H1 (cell line): ENCODE measurements at regions of chr6 and their contacts with region 1.

Region 1: DNA sequence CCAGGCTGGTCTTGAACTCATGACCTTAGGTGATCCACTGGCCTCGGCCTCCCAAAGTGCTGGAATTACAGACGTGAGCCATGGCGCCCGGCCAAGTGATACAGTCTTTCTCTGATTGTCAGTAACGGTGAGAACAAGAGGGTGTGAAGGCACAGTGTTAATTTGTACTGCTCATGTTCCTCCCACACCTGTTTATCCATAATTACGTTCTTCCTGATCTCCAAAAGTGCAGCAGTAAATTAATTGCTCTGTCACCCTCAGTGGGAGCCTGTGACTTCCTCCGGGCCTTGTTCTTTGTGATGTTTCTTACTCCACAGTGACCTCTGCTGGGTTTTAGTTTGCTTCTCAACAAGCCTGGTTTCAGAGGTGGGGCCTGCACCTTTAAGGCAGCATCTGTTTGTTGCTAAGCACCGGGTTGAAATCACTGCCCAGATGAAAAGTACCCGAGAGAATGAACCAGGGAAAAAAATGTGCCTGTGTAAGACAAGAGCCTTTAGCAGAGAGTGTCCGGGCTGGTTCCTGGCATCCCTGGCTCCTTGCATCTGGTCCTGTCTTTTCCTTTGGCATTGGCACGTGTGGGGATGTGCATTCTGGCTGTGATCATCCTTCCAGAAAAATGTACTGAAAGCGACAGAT is 89.1 kb upstream of the CLDN20 start:
- DNase-seq: peak; percentile 54 to 64
- H3K4me3 ChIP-seq: no peak overlapping the region
- H3K27ac ChIP-seq: no peak overlapping the region
- H3K4me1 ChIP-seq: peaks cover 2 to 11% (median 7%) of the 10 kb centered on the region in 4 experiments; a peak in 6 of 7 replicates
- H3K27me3 ChIP-seq: no peaks in the 10 kb centered on the region
- CTCF ChIP-seq: peak; percentile 28 to 80 (median 79)
- EP300 ChIP-seq: no peak
- POLR2A ChIP-seq: no peak
- RAD21 ChIP-seq: peak; percentile 87 to 91

Region 2: GRCh38 chr6:154928325-154928922 is 246.3 kb before region 1 on chr6:
- CTCF ChIA-PET with region 1: interaction called, 63 read pairs
- POLR2A ChIA-PET with region 1: no interaction called
- DNase-seq: peak in 1 of 2 experiments; percentile 77
- H3K4me3 ChIP-seq: no peak overlapping the region
- H3K27ac ChIP-seq: no peak overlapping the region
- H3K4me1 ChIP-seq: peaks cover 5 to 17% (median 7%) of the 10 kb centered on the region in 4 experiments
- H3K27me3 ChIP-seq: no peaks in the 10 kb centered on the region
- CTCF ChIP-seq: peak; percentile 1 to 87 (median 79)
- EP300 ChIP-seq: no peak
- POLR2A ChIP-seq: no peak
- RAD21 ChIP-seq: peak; percentile 97 to 98

Region 3: GRCh38 chr6:155228546-155229166 is 54.0 kb after region 1 on chr6:
- CTCF ChIA-PET with region 1: interaction called, 17 read pairs
- POLR2A ChIA-PET with region 1: no interaction called
- DNase-seq: no peak
- H3K4me3 ChIP-seq: no peak overlapping the region
- H3K27ac ChIP-seq: no peak overlapping the region
- H3K4me1 ChIP-seq: peaks cover 0 to 9% (median 4%) of the 10 kb centered on the region in 4 experiments; a peak in 5 of 7 replicates
- H3K27me3 ChIP-seq: no peaks in the 10 kb centered on the region
- CTCF ChIP-seq: no peak
- EP300 ChIP-seq: no peak
- POLR2A ChIP-seq: no peak
- RAD21 ChIP-seq: no peak

Region 4: DNA sequence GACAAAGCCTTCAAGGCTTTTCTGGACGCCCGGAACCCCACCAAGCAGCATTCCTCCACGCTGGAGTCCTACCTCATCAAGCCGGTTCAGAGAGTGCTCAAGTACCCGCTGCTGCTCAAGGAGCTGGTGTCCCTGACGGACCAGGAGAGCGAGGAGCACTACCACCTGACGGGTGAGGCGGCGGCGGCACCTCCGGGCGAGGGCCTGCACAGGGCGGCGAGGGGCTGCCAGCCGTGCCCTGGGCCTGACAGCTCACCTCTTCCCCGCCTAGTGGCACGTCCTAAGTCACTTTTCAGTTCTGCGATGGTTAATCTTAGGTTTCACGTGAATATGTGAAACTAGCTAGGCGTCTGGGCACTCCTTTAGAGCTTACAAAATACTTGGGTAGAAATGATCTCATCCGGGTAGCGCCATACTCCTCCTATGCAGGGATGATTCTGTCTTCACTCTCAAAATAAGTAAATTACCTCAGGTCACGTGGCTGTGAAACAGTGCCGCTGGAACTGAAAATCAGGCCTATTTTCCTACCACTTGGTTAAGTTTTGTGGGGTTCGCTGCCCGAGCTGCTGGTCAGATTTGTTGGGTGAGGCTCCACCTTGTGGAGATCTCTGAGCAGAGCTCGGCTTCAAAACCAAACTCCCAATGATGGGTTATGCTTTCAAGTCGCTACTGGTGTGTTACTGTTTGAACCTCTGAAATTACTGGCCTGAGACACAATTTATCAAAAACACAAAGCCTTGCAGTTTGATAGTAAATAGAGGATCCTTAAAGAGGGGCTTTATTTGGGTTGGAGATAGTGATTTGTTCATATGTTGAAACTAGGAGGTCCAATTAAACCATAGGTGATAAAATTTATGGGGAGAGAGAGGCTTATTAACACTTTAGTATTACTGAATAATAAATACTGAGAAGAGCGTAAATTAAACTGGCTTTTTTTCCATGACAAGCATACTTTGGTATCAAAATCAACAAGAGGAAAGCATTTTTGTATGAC is 73.6 kb after region 1 on chr6:
- CTCF ChIA-PET with region 1: interaction called, 50 read pairs
- POLR2A ChIA-PET with region 1: interaction called, 8 read pairs
- DNase-seq: peak in 1 of 2 experiments; percentile 67
- H3K4me3 ChIP-seq: no peak overlapping the region
- H3K27ac ChIP-seq: no peak overlapping the region
- H3K4me1 ChIP-seq: 0 out of 7 replicates have a peak, but pooled peaks cover 0 to 3% (median 0%) of the 10 kb centered on the region in 4 experiments
- H3K27me3 ChIP-seq: no peaks in the 10 kb centered on the region
- CTCF ChIP-seq: peak; percentile 71 to 91 (median 82)
- EP300 ChIP-seq: no peak
- POLR2A ChIP-seq: no peak
- RAD21 ChIP-seq: peak; percentile 86 to 90

Region 5: DNA sequence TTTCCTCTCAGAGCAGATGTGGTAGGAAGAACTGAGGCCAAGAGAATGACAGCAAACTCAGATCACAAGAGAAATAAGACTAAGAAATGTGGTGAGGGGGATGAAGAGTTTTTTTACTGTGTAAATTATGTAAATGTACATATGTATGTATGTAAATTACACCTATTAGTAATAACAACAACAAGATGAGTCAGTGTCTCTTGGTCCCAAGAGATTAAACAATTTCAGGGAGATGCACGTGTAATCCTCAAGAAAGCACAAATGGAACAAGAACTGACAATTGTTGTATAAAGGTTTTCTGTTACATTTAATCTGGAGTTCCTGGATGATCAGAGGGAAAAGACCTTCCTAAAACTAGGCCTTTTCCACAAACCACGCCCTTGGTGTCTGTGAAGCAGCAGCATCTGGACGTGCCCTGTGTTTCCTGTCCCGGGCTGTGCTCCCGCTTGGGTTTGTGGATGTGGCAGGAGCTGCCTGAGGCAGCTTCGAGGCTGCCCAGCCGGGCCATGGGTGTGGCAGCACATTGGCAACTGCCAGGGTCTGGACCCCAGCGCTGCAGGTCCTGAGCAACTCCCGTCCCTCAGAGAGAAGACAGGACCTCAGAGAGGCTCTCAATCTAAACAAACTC is 90.1 kb after region 1 on chr6:
- CTCF ChIA-PET with region 1: interaction called, 10 read pairs
- POLR2A ChIA-PET with region 1: no interaction called
- DNase-seq: no peak
- H3K4me3 ChIP-seq: no peak overlapping the region
- H3K27ac ChIP-seq: no peak overlapping the region
- H3K4me1 ChIP-seq: peaks cover 0 to 7% (median 4%) of the 10 kb centered on the region in 4 experiments; a peak in 4 of 7 replicates
- H3K27me3 ChIP-seq: no peaks in the 10 kb centered on the region
- CTCF ChIP-seq: no peak
- EP300 ChIP-seq: no peak
- POLR2A ChIP-seq: no peak
- RAD21 ChIP-seq: no peak

Region 6: DNA sequence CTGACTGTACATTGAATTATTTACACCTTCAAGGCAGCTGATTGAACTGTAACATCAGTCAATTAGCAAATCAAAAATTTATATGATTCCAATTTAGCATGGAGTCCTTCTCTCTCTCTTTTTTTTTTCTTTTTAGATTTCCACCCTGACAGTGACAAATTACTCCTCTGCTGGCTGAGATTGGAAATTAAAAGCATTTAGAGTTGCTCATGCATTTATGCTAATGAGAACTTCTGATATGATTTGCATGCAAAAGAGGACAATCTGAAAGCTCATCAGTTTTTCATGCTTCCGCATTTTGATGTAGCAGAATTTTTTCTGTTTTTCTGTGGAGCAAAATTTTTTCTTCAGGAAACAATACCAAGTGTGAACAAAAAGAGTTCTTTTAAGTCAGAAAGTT is 411.4 kb after region 1 on chr6:
- CTCF ChIA-PET with region 1: no interaction called
- POLR2A ChIA-PET with region 1: no interaction called
- DNase-seq: no peak
- H3K4me3 ChIP-seq: no peak overlapping the region
- H3K27ac ChIP-seq: no peak overlapping the region
- H3K4me1 ChIP-seq: no peaks in the 10 kb centered on the region; a peak in 1 of 7 replicates
- H3K27me3 ChIP-seq: no peaks in the 10 kb centered on the region
- CTCF ChIP-seq: no peak
- EP300 ChIP-seq: no peak
- POLR2A ChIP-seq: no peak
- RAD21 ChIP-seq: no peak